ENCODE measurements at regions of chr12 and their contacts with region 1.

Region 1: DNA sequence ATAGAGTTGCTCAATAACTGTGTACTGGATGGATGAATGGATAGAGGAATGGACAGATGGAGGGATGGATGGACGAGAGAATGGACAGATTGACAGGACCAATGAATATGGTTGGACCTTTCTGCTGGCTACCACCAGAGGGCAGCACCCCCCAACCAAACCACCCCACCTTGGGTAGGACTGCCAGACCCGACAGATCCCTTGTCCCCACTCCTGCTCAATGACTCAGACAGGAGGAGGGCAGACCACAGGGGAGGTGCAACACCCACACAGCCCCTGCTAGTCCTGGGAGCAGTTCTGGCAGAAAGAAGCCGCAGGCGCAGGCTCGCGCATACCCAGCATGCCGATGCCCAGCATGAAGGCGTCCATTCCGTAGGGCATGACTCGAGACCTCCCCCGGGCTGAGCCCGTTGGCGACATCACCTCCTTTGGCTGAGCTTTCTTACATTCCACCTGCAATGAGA is 12.4 kb downstream of the MSI1 start:
- DNase-seq: peak; percentile 72
- H3K4me3 Mint-ChIP-seq: no peak overlapping the region
- H3K27ac Mint-ChIP-seq: no peak overlapping the region
- H3K4me1 Mint-ChIP-seq: no peaks in the 10 kb centered on the region
- H3K27me3 Mint-ChIP-seq: peaks cover 28% of the 10 kb centered on the region

Region 2: DNA sequence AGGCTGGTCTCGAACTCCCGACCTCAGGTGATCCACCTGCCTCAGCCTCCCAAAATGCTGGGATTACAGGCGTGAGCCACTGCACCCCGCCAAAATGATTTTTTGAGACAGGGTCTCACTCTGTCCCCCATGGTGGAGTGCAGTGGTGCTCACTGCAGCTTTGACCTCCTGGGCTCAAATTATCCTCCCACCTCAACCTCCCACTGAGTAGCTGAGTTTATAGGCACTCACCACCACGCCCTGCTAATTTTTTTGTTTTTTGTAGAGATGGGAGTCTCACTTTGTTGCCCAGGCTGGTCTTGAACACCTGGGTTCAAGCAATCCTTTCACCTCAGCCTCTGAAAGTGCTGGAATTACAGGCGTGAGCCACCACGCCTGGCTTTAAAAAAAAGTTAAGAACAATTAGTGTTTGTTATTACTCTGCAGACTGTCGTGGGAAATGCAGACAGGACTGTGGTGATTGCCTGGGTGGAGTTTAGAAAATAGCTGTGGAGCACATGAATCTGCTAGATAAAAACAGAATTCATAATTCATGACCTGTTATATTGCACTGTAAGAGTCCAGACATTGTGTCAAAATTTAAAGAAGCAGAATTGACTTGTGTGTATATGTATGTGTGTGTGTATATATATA is 72.1 kb after region 1 on chr12:
- CTCF ChIA-PET with region 1: interaction called, 18 read pairs
- POLR2A ChIA-PET with region 1: no interaction called
- DNase-seq: no peak
- H3K4me3 Mint-ChIP-seq: no peak overlapping the region
- H3K27ac Mint-ChIP-seq: no peak overlapping the region
- H3K4me1 Mint-ChIP-seq: peaks cover 7% of the 10 kb centered on the region
- H3K27me3 Mint-ChIP-seq: peaks cover 18% of the 10 kb centered on the region

Measured in activated CD4-positive, alpha-beta memory T cell treated with anti-CD3 and anti-CD28 coated beads, Interleukin-2, amount 10 ng/mL, durations not matched to agents 7 days and 5 days (primary cell).